ENCODE measurements at regions of chr19 and their contacts with region 1.

Region 1: DNA sequence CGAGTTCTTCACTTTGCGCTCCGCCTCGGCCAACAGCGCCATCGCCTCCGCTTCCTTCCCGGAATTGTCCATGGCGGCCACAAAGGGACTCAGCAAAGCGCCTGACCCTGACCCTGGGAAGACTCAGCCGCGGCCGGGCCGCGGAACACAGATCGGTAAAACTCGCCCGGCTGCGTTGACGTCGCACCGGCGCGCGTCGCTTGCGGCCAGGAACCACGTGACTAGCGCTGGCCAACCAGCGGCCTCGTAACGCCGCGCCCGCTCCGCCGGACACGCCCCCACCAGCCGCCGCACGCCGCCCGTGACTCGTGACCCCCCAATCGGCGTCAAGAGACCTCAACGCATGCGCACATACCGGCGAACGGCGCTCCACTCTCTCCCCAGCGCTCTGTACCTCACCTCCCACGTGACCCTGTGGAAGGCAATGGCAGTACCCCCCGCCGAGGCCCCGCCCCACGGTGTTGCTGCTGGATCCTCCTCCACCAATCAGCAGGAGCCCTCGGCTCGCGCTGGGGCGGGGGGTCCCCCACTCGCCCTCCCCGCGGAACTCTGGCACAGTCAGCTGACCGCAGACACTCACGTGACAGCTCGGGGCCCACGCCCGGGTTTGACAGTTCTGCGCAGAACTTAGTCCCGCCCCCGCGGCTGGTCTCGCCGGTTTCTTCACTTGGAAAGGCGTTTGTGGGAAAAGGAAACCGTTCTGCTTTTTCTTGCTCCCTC is at the start of gene NAPA:
- DNase-seq: peak; percentile 100
- H3K4me3 Mint-ChIP-seq: peak within 1 kb of the TSS; percentile 90
- H3K27ac Mint-ChIP-seq: peak within 1 kb of the TSS; percentile 99
- H3K4me1 Mint-ChIP-seq: peaks cover 88% of the 10 kb centered on the region
- H3K27me3 Mint-ChIP-seq: no peaks in the 10 kb centered on the region
- total RNA-seq, gene NAPA: 121 to 133 TPM

Region 2: DNA sequence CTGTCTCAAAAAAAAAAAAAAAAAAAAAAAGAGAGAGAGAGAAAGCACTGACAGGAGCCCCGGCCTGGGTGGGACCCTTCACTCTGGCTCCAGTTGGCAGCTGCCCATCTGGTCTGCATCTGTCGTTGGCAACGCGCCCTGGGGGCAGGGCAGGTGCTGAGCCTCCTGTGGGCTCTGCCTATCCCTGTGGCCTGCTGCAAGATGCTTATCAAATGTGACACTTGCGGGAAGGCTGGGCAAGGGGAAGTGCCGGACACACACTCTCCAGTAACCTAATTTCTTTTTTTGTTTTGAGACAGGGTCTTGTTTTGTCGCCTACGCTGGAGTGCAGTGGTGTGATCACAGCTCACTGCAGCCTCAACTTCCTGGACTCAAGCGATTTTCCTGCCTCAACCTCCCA is 20.3 kb before region 1 on chr19:
- CTCF ChIA-PET with region 1: interaction called, 7 read pairs
- POLR2A ChIA-PET with region 1: interaction called, 13 read pairs
- DNase-seq: no peak
- H3K4me3 Mint-ChIP-seq: no peak overlapping the region
- H3K27ac Mint-ChIP-seq: no peak overlapping the region
- H3K4me1 Mint-ChIP-seq: peaks cover 6% of the 10 kb centered on the region
- H3K27me3 Mint-ChIP-seq: no peaks in the 10 kb centered on the region